ENCODE measurements at regions of chr12 and their contacts with region 1.

Region 1: DNA sequence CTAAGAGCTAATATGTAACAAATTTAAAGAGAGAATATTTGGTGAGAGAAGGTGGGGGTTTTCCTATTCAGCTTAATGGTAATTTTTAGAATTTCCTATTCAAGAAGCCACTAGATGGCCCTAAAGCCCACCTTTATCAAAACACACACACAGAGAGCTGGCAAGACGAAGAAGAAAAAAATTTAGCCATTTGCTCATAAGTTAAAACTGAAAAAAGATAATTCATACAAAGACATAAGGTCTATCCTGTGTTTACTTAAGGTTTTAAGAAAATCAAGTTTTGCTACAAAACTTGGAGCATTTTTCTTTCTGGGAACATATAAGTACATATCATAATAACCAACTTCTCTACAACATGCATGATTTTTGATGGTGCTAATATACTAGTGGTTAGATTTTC is 46.8 kb upstream of the PCED1B start:
- DNase-seq: peak; percentile 34
- H3K4me3 Mint-ChIP-seq: no peak overlapping the region
- H3K27ac Mint-ChIP-seq: peak overlapping the region; percentile 79
- H3K4me1 Mint-ChIP-seq: peaks cover 43% of the 10 kb centered on the region
- H3K27me3 Mint-ChIP-seq: no peaks in the 10 kb centered on the region

Region 2: GRCh38 chr12:47021298-47021697 is 11.3 kb before region 1 on chr12:
- CTCF ChIA-PET with region 1: interaction called, 40 read pairs
- intact Hi-C with region 1: no loop called
- DNase-seq: no peak
- H3K4me3 Mint-ChIP-seq: no peak overlapping the region
- H3K27ac Mint-ChIP-seq: no peak overlapping the region
- H3K4me1 Mint-ChIP-seq: no peaks in the 10 kb centered on the region
- H3K27me3 Mint-ChIP-seq: no peaks in the 10 kb centered on the region

Region 3: GRCh38 chr12:47088021-47088944 is 55.6 kb after region 1 on chr12:
- CTCF ChIA-PET with region 1: no interaction called
- intact Hi-C with region 1: no loop called
- DNase-seq: no peak
- H3K4me3 Mint-ChIP-seq: no peak overlapping the region
- H3K27ac Mint-ChIP-seq: no peak overlapping the region
- H3K4me1 Mint-ChIP-seq: peaks cover 42% of the 10 kb centered on the region
- H3K27me3 Mint-ChIP-seq: no peaks in the 10 kb centered on the region

Region 4: GRCh38 chr12:47099610-47100009 is 67.0 kb after region 1 on chr12:
- CTCF ChIA-PET with region 1: no interaction called
- intact Hi-C with region 1: no loop called
- DNase-seq: no peak
- H3K4me3 Mint-ChIP-seq: no peak overlapping the region
- H3K27ac Mint-ChIP-seq: no peak overlapping the region
- H3K4me1 Mint-ChIP-seq: peaks cover 13% of the 10 kb centered on the region
- H3K27me3 Mint-ChIP-seq: no peaks in the 10 kb centered on the region

Region 5: GRCh38 chr12:47190271-47190750 is 157.7 kb after region 1 on chr12:
- CTCF ChIA-PET with region 1: no interaction called
- intact Hi-C with region 1: loop called (anchors 1 kb)
- DNase-seq: peak; percentile 75
- H3K4me3 Mint-ChIP-seq: peak overlapping the region; percentile 48
- H3K27ac Mint-ChIP-seq: peak overlapping the region; percentile 92
- H3K4me1 Mint-ChIP-seq: peaks cover 88% of the 10 kb centered on the region
- H3K27me3 Mint-ChIP-seq: no peaks in the 10 kb centered on the region

Region 6: DNA sequence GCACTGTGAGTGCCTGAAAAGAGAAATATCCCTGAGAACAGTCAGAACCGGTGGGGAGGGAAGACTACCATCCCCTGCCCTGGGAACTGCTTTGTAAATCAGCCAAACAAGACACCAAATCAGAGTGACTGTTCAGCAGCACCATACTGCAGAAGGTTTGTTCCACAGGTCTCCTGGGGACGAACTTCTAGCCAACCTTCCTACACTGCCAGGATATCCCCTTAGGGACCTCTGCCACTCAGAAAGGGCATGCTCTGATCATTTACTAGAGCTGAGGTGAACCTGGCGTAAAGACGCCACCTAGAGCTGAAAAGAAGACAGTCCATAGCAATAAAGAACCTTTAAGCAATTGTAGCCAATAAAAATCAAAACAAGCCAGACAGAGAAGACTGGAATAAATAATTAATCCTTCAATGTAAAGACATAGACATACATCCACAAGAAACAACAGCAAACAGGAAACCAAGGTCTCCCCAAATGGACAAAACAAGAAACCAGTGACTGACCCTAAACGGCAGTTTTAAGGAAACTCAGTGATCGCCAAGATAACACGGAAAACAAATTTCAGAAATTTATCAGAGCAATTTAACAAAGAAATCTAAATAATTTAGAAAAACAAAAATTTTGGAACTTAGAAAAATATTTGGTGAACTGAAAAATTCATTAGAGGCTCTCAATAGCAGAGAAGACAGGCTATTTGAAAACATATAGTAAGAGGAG is 275.2 kb after region 1 on chr12:
- CTCF ChIA-PET with region 1: interaction called, 8 read pairs
- intact Hi-C with region 1: loop called (anchors 1 kb)
- DNase-seq: peak; percentile 74
- H3K4me3 Mint-ChIP-seq: peak overlapping the region; percentile 91
- H3K27ac Mint-ChIP-seq: peak overlapping the region; percentile 98
- H3K4me1 Mint-ChIP-seq: peaks cover 73% of the 10 kb centered on the region
- H3K27me3 Mint-ChIP-seq: no peaks in the 10 kb centered on the region

Region 7: DNA sequence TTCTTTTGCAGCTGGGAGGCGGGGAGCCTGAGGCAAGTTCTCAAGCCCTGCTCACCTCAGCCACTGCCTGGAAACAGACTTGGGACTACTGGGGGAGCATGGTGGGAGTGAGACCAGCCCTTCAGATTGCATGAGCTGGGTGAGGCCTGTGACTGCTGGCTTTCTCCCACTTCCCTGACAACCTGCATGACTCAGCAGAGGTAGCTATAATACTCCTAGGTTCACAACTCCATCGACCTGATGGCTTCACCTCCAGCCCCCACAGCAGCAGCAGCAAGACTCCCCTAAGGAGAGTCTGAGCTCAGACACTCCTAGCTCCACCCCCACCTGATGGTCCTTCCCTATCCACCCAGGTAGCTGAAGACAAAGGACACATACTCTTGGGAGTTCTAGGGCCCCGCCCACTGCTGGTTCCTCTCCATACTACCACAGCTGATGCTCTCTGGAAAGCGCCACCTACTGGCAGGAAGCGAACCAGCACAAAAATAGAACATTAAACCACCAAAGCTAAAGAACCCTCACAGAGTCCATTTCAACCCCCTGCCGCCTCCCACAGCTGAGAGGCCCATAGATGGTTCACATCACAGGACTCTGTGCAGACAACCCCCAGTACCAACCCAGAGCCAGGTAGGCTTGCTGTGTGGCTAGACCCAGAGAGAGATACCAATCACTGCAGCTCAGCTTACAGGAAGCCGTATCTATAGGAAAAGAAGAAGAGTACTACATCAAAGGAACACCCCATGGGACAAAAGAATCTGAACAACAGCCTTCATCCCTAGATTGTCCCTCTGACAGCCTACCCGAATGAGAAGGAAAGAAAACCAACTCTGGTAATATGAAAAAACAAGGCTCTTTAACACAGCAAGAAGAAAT is 604.5 kb after region 1 on chr12:
- CTCF ChIA-PET with region 1: interaction called, 4 read pairs
- intact Hi-C with region 1: loop called (anchors 2 kb)
- DNase-seq: peak; percentile 68
- H3K4me3 Mint-ChIP-seq: no peak overlapping the region
- H3K27ac Mint-ChIP-seq: no peak overlapping the region
- H3K4me1 Mint-ChIP-seq: peaks cover 2% of the 10 kb centered on the region
- H3K27me3 Mint-ChIP-seq: no peaks in the 10 kb centered on the region

Region 8: DNA sequence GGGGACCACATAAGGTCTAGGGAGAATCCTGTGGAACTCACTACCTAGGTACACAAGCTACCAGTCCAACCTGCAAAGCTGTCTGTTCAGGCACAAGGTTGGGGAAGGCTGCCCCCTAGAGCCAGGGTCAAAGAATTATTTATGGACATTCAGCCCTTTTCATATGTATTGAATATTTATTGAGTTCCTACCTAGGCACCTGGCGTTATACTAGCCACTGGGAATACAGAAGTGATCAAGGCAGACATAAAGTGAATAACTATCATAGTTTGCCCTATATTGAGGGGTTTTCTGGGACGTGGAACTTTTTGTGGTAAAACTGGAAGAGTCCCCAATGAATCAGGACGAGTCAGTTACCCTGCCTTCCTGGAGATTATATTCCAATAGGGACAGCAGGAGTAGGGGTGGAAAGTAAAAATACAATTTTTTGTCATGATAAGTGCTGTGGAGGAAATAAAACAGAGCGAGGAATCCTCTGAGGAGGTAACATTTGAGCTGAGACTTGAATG is 734.6 kb after region 1 on chr12:
- CTCF ChIA-PET with region 1: interaction called, 6 read pairs
- intact Hi-C with region 1: loop called (anchors 2 kb)
- DNase-seq: peak; percentile 89
- H3K4me3 Mint-ChIP-seq: no peak overlapping the region
- H3K27ac Mint-ChIP-seq: no peak overlapping the region
- H3K4me1 Mint-ChIP-seq: no peaks in the 10 kb centered on the region
- H3K27me3 Mint-ChIP-seq: no peaks in the 10 kb centered on the region

Measured in activated naive CD4-positive, alpha-beta T cell treated with anti-CD3 and anti-CD28 coated beads for 36 hours (primary cell).